ENCODE measurements at regions of chr3 and their contacts with region 1.

Region 1: DNA sequence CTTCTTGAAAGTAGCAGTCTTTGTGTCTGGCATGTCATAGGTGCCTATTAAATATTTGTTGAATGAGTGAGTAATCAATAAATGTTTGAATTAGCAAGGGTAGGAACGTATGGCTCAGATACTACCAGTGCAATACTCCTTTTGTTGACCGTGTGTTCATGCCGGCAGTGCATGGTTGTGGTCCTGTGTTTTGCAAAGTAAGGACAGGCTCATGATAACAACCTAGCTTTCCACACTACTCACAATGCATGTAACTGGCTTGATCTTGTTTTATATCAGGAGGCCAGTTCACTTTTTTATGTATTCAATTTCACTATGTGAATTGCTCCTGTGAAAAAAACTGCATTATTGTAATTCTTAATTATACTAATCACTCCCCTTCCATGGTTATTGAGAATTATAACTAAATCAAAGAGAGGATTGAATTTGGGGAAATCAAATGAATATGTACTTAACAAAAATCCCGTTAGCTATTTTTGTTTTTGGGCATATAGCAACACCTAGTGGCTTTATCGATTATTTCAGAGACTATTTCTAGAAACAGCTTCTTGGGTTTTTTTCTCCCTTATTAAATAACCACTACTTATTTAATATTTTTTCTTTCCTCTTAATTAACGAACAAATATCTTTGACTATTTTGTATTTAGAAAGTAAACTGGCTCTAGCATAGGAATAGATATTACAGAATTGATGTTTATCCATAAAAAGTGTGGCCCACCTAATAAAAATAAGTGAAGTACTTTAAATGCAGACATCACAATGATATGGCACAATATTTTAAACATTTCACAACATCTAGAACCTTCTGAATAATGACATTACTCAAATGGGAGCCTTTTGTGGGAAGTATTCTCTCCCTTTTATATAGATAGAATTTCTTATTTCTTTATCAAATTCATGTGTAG is 218.5 kb downstream of the BBX start:
- DNase-seq: no peak
- ATAC-seq: 0 out of 2 replicates have a peak, but pooled peaks have one; percentile 58
- H3K4me3 ChIP-seq: no peak overlapping the region
- H3K27ac ChIP-seq: no peak overlapping the region
- H3K4me1 ChIP-seq: no peaks in the 10 kb centered on the region
- H3K27me3 ChIP-seq: no peaks in the 10 kb centered on the region
- CTCF ChIP-seq: peak; percentile 52; the same call in 1 of the 2 replicates

Region 2: GRCh38 chr3:107522510-107523288 is 218.5 kb before region 1 on chr3 and contains the start of gene BBX:
- CTCF ChIA-PET with region 1: no interaction called
- POLR2A ChIA-PET with region 1: no interaction called
- in situ Hi-C with region 1: no loop called
- intact Hi-C with region 1: no loop called
- DNase-seq: peak; percentile 98
- ATAC-seq: peak; percentile 96
- H3K4me3 ChIP-seq: peak within 1 kb of the TSS; percentile 59 to 86
- H3K27ac ChIP-seq: peak within 1 kb of the TSS; percentile 67
- H3K4me1 ChIP-seq: peaks cover 4% of the 10 kb centered on the region
- H3K27me3 ChIP-seq: peaks cover 8% of the 10 kb centered on the region; the same call in 1 of the 2 replicates
- CTCF ChIP-seq: no peak
- total RNA-seq, gene BBX: 28.5 TPM

Region 3: DNA sequence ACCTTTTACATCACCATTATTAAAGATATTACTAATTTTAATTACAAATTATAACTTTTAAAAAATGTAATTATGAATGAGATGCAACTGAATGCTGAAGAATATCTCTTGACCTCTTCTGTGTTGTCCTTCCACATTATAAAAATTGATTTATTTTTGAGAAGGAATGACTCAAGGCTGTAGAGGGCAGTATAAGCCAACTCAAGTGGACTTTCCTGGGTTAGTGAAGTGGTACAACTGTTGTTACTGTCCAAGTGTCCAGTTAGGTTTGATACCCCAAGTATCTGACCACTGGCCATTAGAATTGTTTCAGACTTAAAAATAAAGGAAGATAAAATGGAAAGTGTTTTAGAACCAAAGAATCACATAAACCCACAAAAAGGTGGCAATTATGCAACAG is 166.6 kb before region 1 on chr3:
- CTCF ChIA-PET with region 1: interaction called, 3 read pairs
- POLR2A ChIA-PET with region 1: no interaction called
- in situ Hi-C with region 1: no loop called
- intact Hi-C with region 1: loop called (anchors 5 kb)
- DNase-seq: peak; percentile 12
- ATAC-seq: peak; percentile 83; the same call in 1 of the 2 replicates
- H3K4me3 ChIP-seq: no peak overlapping the region
- H3K27ac ChIP-seq: no peak overlapping the region
- H3K4me1 ChIP-seq: no peaks in the 10 kb centered on the region
- H3K27me3 ChIP-seq: no peaks in the 10 kb centered on the region
- CTCF ChIP-seq: peak; percentile 74; the same call in 1 of the 2 replicates

Region 4: GRCh38 chr3:107676469-107677309 is 64.6 kb before region 1 on chr3:
- CTCF ChIA-PET with region 1: interaction called, 4 read pairs
- POLR2A ChIA-PET with region 1: no interaction called
- in situ Hi-C with region 1: no loop called
- intact Hi-C with region 1: loop called (anchors 2 kb)
- DNase-seq: no peak
- ATAC-seq: peak; percentile 83
- H3K4me3 ChIP-seq: no peak overlapping the region
- H3K27ac ChIP-seq: no peak overlapping the region
- H3K4me1 ChIP-seq: no peaks in the 10 kb centered on the region
- H3K27me3 ChIP-seq: no peaks in the 10 kb centered on the region; the same call in none of the 2 replicates
- CTCF ChIP-seq: peak; percentile 71; the same call in 1 of the 2 replicates

Region 5: GRCh38 chr3:107690522-107691138 is 50.6 kb before region 1 on chr3:
- CTCF ChIA-PET with region 1: interaction called, 3 read pairs
- POLR2A ChIA-PET with region 1: no interaction called
- in situ Hi-C with region 1: no loop called
- intact Hi-C with region 1: loop called (anchors 1 kb)
- DNase-seq: peak; percentile 8
- ATAC-seq: peak; percentile 73; the same call in 1 of the 2 replicates
- H3K4me3 ChIP-seq: no peak overlapping the region
- H3K27ac ChIP-seq: no peak overlapping the region
- H3K4me1 ChIP-seq: no peaks in the 10 kb centered on the region; the same call in 1 of the 2 replicates
- H3K27me3 ChIP-seq: no peaks in the 10 kb centered on the region
- CTCF ChIP-seq: peak; percentile 70

Region 6: DNA sequence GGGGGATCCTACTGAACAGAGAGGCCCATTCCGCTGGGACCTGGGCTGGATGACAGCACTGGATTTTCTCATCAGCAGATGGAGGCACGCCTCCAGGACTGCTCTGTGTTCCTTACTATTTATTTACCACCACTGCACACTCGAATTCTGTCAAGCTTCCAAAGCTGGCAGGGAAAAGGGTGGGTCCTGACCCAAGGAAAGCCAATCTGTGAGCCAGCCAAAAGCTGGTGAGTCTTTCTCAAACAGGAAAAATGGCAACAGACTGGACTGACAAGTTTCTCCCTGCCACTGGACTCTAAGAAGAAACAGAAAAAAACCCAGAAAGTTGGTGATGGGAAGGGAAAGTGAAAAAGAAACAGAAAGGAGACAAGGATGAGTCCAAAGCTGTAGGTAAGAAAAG is 311.8 kb after region 1 on chr3:
- CTCF ChIA-PET with region 1: no interaction called
- POLR2A ChIA-PET with region 1: no interaction called
- in situ Hi-C with region 1: no loop called
- intact Hi-C with region 1: no loop called
- DNase-seq: no peak
- ATAC-seq: no peak
- H3K4me3 ChIP-seq: no peak overlapping the region
- H3K27ac ChIP-seq: no peak overlapping the region
- H3K4me1 ChIP-seq: no peaks in the 10 kb centered on the region
- H3K27me3 ChIP-seq: no peaks in the 10 kb centered on the region
- CTCF ChIP-seq: no peak

Measured in Panc1 (cell line).